Head of caudate nucleus (tissue), 42 donors: ENCODE measurements at regions of chr18 and their contacts with region 1.

Region 1: DNA sequence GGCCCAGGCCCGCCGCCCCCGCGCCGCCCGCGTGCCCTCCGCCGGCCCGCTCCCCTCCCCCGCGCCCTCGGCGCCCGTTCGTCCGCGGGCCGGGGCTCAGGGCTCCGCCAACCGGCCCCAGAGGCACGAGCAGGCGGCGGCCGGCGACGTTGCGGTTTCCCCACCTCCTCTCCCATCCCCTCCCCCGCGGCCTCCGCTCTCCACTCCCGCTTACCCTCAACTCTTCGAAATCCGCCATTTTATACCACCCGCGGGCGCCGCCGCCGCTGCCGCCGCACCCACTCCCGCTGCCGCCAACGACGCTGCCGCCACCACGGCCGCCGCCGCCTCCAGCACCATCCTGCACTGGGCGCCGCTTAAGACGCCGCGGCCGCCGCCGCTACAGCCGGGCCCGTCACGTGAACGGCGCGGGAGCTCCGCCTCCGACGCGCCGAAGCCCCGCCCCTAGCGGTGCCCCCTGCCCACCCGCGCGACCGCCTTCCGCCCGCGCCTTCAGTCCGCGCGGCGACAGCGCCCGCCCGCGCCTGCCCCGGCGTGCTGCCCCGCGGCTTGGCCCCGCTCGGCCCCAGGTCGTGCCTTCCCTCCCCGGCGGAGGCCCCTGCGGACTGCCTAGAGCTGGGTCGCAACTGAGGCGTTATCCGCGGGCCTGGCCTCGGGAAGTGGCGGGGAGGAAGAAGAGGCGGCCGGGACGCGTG is at the starts of genes KATNAL2 and PIAS2:
- DNase-seq: peak; percentile 58 to 94 (median 87)

Region 2: DNA sequence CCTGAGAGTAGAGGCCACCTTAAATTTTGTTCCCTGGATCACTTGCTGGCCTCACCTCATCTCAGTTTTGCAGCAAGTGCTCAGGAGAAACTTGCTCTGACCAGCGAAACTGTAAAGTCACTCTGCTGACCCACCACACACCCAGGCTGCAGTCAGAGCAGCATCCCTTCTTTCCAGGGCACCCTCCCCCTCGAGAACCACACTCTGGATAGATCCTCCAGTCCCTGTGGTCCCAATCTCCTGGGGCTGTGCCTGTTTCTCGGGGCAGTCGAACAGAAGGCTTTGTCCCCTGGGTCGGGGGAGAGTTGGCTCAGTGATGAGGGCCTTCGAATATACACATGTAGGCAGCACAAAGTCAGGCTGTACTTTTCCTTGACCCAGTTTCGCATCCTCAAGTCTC is 178.8 kb before region 1 on chr18:
- intact Hi-C with region 1: no loop called
- DNase-seq: peak in 3 of 42 donors; percentile 7 to 27 (median 10)

Region 3: DNA sequence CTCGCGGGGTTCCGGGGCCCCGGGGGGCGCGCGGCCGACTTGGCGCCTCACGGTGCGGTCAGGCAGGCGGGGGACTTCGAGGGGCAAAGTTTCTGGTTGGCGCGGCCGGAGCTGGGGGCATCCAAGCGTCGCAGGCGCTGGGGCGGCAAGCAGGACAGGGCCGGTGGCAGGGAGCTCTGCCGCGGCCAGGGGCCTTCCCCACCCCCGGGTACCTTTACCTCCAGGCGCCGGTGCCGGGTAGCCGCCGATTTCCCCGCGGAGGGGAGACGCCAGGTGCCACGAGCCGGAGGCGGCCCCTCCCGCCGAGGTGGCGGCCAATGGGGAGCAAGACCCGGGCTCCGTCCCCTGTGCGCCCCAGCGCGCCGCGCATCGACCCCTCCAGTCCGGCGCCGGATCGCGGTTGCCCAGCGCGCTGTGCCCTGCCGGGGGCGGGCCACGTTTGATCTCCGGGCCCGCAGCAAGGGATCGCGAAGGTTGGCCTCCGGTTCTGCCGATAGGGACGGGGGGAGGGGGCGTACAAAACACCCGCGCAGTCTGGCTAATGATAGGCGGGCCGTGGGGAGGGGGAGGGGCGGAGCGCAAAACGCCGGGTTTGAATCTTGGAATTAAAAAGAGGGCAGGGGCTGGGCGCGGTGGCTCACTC is 160.6 kb before region 1 on chr18 and contains the start of gene ST8SIA5:
- intact Hi-C with region 1: loop called (anchors 10 kb)
- DNase-seq: peak in 21 of 42 donors; percentile 19 to 55 (median 31)